HCT116 (cell line): ENCODE measurements at regions of chr12 and their contacts with region 1.

Region 1: DNA sequence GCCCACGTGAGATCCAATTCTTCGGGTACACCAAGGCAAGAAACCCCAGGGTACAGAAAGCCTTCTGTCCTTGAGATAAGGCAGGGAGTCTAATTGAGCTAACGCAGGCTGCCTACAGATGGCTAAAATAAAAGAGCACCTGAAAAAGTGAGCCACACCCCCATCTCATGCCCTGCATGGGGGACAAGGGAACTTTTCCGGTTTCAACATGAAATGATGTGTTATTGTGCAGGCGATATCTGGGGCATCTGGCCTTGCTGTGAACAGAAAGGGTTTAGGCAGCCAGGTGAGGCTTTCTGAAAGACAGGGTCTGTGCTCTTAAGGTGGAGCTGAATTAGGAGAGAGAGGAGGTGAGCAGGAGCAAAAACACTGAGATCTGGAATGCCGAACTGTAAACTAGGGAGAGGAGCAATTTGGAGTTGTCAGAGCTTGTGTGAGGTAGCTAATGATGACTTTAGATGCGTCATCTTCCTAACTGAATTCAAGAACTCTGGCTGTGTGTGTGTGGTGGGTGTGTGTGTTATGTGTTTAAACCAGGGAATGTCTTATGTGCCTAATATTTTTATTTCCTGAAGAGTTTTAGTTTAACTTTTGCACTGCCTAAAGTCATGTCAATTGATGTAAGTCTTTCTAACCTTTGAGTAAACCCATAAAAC is 20.1 kb upstream of the LDHB start:
- DNase-seq: no peak
- ATAC-seq: no peak
- H3K4me3 ChIP-seq: no peak overlapping the region
- H3K27ac ChIP-seq: no peak overlapping the region
- H3K4me1 ChIP-seq: no peaks in the 10 kb centered on the region
- H3K27me3 ChIP-seq: 0 out of 2 replicates have a peak, but pooled peaks cover 6% of the 10 kb centered on the region
- CTCF ChIP-seq: no peak
- POLR2A ChIP-seq: no peak
- RAD21 ChIP-seq: no peak

Region 2: DNA sequence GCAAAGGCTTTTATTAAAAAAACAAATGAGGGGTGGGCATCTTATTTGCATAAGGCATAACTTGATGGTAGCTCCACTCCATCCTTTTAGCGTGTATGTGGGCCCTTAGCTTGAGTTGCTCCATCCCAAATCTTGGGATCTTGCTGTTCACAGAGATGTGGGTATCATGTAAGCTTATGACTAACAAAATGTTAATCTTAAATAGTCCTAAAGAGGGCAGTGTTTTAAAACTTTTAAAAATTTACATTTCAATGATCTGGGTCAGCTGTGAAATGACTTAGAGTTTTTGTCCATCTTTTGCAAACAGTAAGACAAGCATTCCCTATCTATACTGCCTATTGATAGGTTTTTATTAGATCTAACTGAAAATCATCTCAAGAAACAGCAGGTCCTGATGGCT is 429.1 kb before region 1 on chr12:
- CTCF ChIA-PET with region 1: interaction called, 23 read pairs
- POLR2A ChIA-PET with region 1: no interaction called
- RAD21 ChIA-PET with region 1: interaction called in 1 of 2 experiments, 5 read pairs
- intact Hi-C with region 1: loop called (anchors 1 kb)
- DNase-seq: no peak
- ATAC-seq: peak; percentile 71
- H3K4me3 ChIP-seq: no peak overlapping the region
- H3K27ac ChIP-seq: no peak overlapping the region
- H3K4me1 ChIP-seq: no peaks in the 10 kb centered on the region
- H3K27me3 ChIP-seq: no peaks in the 10 kb centered on the region
- CTCF ChIP-seq: peak; percentile 12 to 46 (median 17); a peak in 2 of 6 replicates
- POLR2A ChIP-seq: no peak
- RAD21 ChIP-seq: peak; percentile 35

Region 3: DNA sequence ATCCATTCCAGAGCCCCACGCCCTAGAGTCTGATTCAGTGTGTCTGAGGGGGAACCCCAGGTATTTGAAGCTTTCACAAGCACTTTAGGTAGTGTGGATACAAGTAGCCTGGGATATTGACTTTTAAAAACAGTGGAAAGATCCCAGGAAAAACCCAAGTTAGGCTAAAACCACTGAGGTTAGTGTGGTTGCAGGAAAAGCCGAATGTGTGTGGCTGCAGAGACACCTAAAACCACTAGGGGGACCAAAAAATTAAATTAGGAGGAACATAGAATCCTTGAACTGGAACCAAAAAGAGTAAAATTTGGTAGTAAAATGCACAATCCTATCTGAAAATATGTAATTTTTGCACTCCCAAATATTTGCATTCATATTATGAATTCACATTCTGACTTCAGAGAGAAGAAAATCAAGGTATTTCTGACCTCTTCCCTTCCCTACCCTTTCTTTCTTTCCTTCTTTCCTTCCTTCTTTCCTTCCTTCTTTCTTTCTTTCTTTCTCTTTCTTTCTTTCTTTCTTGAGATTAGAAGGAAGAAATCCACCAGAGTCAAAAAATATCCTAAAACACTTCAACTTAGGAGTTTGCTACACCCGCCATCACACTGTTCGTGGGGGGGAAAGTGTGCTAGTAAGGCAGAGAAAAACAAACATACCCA is 380.9 kb before region 1 on chr12:
- CTCF ChIA-PET with region 1: interaction called, 3 read pairs
- POLR2A ChIA-PET with region 1: no interaction called
- RAD21 ChIA-PET with region 1: no interaction called
- intact Hi-C with region 1: loop called (anchors 5 kb)
- DNase-seq: no peak
- ATAC-seq: peak; percentile 70
- H3K4me3 ChIP-seq: no peak overlapping the region
- H3K27ac ChIP-seq: no peak overlapping the region
- H3K4me1 ChIP-seq: no peaks in the 10 kb centered on the region
- H3K27me3 ChIP-seq: no peaks in the 10 kb centered on the region
- CTCF ChIP-seq: peak; percentile 31 to 76 (median 74); a peak in 5 of 6 replicates
- POLR2A ChIP-seq: no peak
- RAD21 ChIP-seq: peak; percentile 36

Region 4: GRCh38 chr12:21308785-21309184 is 369.0 kb before region 1 on chr12:
- CTCF ChIA-PET with region 1: interaction called, 4 read pairs
- POLR2A ChIA-PET with region 1: no interaction called
- RAD21 ChIA-PET with region 1: no interaction called
- intact Hi-C with region 1: loop called (anchors 1 kb)
- DNase-seq: no peak
- ATAC-seq: no peak
- H3K4me3 ChIP-seq: no peak overlapping the region
- H3K27ac ChIP-seq: no peak overlapping the region
- H3K4me1 ChIP-seq: no peaks in the 10 kb centered on the region
- H3K27me3 ChIP-seq: 0 out of 2 replicates have a peak, but pooled peaks cover 5% of the 10 kb centered on the region
- CTCF ChIP-seq: no peak
- POLR2A ChIP-seq: no peak
- RAD21 ChIP-seq: 0 out of 2 replicates have a peak, but pooled peaks have one; percentile 6

Region 5: GRCh38 chr12:21607701-21608100 is 70.0 kb before region 1 on chr12:
- CTCF ChIA-PET with region 1: interaction called, 5 read pairs
- POLR2A ChIA-PET with region 1: no interaction called
- RAD21 ChIA-PET with region 1: no interaction called
- intact Hi-C with region 1: loop called (anchors 1 kb)
- DNase-seq: peak; percentile 12
- ATAC-seq: no peak
- H3K4me3 ChIP-seq: no peak overlapping the region
- H3K27ac ChIP-seq: no peak overlapping the region
- H3K4me1 ChIP-seq: no peaks in the 10 kb centered on the region
- H3K27me3 ChIP-seq: no peaks in the 10 kb centered on the region
- CTCF ChIP-seq: peak in 2 of 3 experiments; percentile 38 to 41; a peak in 3 of 6 replicates
- POLR2A ChIP-seq: no peak
- RAD21 ChIP-seq: peak; percentile 50; the same call in 1 of the 2 replicates

Region 6: DNA sequence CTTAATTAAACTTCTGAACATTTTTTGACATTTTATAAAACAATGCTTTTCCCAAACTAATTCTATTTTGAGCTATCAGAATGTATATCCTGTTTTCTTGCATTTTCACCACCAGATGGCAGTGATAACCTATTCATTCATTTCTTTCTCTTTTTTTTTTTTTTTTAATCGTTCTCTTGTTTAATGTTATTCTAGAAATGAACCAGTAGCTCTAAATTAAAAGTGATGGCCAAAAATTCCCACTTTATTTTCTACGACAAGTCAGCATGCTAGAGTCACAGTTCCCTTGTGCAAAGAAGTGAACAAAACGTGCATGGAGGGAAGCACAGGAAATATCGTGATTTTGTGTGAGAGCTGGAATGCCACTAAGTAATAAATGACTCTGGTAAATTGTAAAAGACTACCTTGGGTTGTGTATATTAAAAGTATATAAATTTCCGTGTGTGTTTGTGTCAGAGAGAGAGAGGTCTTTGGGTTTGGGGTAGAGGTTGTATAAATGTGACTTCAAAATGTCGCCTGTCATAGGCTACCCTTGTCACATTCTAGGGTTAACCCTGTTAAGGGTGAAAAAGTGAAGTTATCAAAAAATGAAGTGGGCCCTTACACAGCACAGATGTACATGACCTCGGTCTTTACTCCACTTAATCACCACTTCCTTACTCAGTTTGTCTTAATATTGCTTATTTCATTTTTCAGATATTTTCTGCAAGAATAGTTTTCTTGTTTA is 20.3 kb after region 1 on chr12:
- CTCF ChIA-PET with region 1: interaction called, 19 read pairs
- POLR2A ChIA-PET with region 1: no interaction called
- RAD21 ChIA-PET with region 1: no interaction called
- intact Hi-C with region 1: no loop called
- DNase-seq: peak; percentile 31
- ATAC-seq: 0 out of 2 replicates have a peak, but pooled peaks have one; percentile 49
- H3K4me3 ChIP-seq: no peak overlapping the region
- H3K27ac ChIP-seq: no peak overlapping the region
- H3K4me1 ChIP-seq: no peaks in the 10 kb centered on the region; a peak in 1 of 4 replicates
- H3K27me3 ChIP-seq: no peaks in the 10 kb centered on the region
- CTCF ChIP-seq: peak; percentile 37 to 80 (median 59); a peak in 5 of 6 replicates
- POLR2A ChIP-seq: no peak
- RAD21 ChIP-seq: peak; percentile 69